Activated T-helper 2 cell treated with anti-CD3 and anti-CD28 coated beads, Interferon-gamma antibody, Interleukin-2, Interleukin-4, amounts not matched to agents 10 μg/mL and 5 μg/mL and 100 μg/mL, durations not matched to agents 14 hours and 24 hours and 36 hours (primary cell): ENCODE measurements at regions of chr17 and their contacts with region 1.

Region 1: GRCh38 chr17:8949061-8949661 is 16.3 kb downstream of the PIK3R5 start:
- DNase-seq: no peak
- H3K4me3 Mint-ChIP-seq: peak overlapping the region; percentile 62
- H3K27ac Mint-ChIP-seq: peak overlapping the region; percentile 85
- H3K4me1 Mint-ChIP-seq: peaks cover 75% of the 10 kb centered on the region
- H3K27me3 Mint-ChIP-seq: no peaks in the 10 kb centered on the region

Region 2: DNA sequence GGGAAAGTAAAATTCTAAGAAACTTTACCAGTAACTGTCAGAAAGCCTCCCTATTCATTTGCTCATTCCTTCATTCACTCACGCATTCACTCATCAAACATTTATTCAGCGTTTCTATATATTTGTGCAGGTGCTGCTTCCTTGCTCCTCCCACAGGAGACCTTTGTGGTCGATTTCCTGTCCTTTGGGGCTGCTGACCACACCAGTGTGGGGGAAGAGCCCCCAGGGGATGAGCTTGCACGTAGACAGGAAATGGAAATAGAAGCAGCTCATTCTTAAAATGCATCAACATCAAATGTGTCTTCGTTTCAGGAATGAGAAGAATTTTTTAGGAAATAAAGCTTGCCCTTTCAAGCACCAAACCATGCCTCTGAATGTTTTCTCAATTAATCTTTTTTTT is 91.2 kb before region 1 on chr17:
- intact Hi-C with region 1: loop called (anchors 2 kb)
- DNase-seq: peak; percentile 55
- H3K4me3 Mint-ChIP-seq: peak overlapping the region; percentile 75
- H3K27ac Mint-ChIP-seq: peak overlapping the region; percentile 95
- H3K4me1 Mint-ChIP-seq: peaks cover 58% of the 10 kb centered on the region
- H3K27me3 Mint-ChIP-seq: no peaks in the 10 kb centered on the region

Region 3: DNA sequence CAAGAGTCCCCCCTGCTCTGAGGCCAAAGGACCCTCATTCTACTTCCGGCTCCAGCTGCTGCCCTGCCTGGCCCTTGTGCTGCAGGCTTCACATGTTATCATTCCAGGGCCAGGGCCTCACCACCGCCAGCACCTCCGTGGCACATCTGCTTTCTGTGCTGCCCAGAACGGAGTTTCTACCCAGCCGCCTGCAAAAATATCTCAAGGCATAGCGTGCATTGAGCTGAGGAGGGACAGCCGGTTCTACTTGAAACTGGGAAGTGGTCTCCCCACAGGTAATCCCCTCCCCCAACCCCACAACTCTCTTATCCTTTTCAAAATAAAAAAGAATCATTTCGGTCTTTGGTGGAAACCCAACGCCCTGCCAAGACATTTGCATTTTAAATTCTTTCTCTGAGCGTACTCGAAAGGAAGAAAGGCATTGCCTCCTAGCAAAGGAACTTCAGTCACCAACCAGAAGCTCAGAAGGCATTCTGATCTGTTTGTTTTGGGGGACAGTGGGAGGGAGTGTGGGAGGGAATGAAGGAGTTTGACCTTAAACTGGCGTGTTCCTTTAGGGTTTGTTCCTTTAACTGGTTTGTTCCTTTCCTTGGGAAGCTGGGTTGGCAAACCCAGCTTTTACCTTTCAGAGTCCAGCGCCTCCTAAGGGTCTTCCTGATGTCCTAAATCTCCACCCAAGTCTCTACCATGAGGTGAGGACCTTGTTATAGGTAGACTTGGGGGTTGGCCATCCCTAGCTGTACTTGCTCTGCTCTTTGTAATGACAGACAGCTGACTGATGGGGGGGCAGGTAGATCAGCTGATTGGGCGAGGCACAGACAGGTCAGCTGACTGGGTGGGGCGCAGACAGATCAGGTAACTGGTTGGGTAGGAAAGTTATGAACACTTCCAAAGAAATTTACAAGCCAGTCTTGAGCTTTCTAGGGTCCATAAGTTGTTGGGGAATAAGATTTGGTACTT is 48.3 kb before region 1 on chr17:
- intact Hi-C with region 1: loop called (anchors 2 kb)
- DNase-seq: no peak
- H3K4me3 Mint-ChIP-seq: peak overlapping the region; percentile 27
- H3K27ac Mint-ChIP-seq: peak overlapping the region; percentile 91
- H3K4me1 Mint-ChIP-seq: peaks cover 64% of the 10 kb centered on the region
- H3K27me3 Mint-ChIP-seq: no peaks in the 10 kb centered on the region

Region 4: DNA sequence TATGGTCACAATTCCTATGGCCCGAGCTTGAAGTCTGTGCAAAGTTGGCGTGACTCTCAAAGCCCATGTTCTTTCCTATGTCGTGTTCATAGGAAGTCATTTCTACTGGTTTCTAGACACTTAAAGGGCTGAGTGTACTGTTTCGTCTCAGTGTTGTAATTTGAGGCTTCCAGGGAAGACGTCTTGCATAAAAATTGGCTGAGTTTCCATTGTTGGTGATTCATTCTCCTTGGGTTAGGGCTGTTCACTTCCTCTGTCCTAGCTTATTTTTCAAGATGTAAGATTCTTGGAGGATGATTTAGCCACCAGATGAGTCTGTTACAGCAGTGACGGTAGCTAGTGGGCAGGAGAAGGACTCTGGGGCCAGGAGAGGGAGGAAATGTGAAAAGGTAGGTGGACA is 26.7 kb before region 1 on chr17:
- intact Hi-C with region 1: loop called (anchors 1 kb)
- DNase-seq: no peak
- H3K4me3 Mint-ChIP-seq: peak overlapping the region; percentile 34
- H3K27ac Mint-ChIP-seq: peak overlapping the region; percentile 95
- H3K4me1 Mint-ChIP-seq: peaks cover 26% of the 10 kb centered on the region
- H3K27me3 Mint-ChIP-seq: no peaks in the 10 kb centered on the region

Region 5: GRCh38 chr17:8935191-8935590 is 14.0 kb before region 1 on chr17:
- intact Hi-C with region 1: loop called (anchors 2 kb)
- DNase-seq: no peak
- H3K4me3 Mint-ChIP-seq: peak overlapping the region; percentile 30
- H3K27ac Mint-ChIP-seq: peak overlapping the region; percentile 91
- H3K4me1 Mint-ChIP-seq: peaks cover 50% of the 10 kb centered on the region
- H3K27me3 Mint-ChIP-seq: no peaks in the 10 kb centered on the region

Region 6: GRCh38 chr17:8963647-8964258 is 14.6 kb after region 1 on chr17:
- intact Hi-C with region 1: loop called (anchors 1 kb)
- DNase-seq: no peak
- H3K4me3 Mint-ChIP-seq: peak overlapping the region; percentile 99
- H3K27ac Mint-ChIP-seq: peak overlapping the region; percentile 93
- H3K4me1 Mint-ChIP-seq: peaks cover 62% of the 10 kb centered on the region
- H3K27me3 Mint-ChIP-seq: no peaks in the 10 kb centered on the region

Region 7: GRCh38 chr17:9151091-9151490 is 201.9 kb after region 1 on chr17:
- intact Hi-C with region 1: no loop called
- DNase-seq: no peak
- H3K4me3 Mint-ChIP-seq: no peak overlapping the region
- H3K27ac Mint-ChIP-seq: no peak overlapping the region
- H3K4me1 Mint-ChIP-seq: no peaks in the 10 kb centered on the region
- H3K27me3 Mint-ChIP-seq: peaks cover 2% of the 10 kb centered on the region